Endothelial cell of umbilical vein (primary cell): ENCODE measurements at regions of chr13 and their contacts with region 1.

Region 1: DNA sequence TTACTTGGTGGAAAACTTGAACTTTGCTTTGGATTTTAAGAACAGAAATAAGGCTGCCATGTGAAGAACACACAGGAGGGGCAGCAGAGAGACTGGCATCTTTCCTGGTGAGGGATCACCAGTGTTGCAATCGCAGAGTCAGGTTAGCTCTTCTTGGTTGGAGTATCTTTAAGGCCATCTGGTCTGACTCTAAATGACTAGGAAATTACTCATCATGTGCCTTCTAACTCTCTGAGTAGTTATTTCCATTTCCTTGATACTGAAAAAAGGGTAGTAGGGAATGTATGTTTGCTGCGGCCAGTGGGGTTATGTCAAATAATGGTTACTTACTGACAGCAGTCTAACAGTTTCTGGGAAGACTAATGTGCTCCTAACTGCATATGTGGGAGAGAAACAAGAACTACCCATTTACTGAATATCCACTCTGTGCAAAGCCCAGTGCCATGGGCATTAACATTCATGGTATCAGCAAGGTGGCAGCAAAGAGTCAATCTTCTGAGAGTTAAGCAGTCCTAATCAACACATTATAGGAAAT is 122.1 kb downstream of the COG6 start:
- DNase-seq: peak; percentile 88
- H3K4me3 ChIP-seq: no peak overlapping the region
- H3K27ac ChIP-seq: peak overlapping the region; percentile 99
- H3K4me1 ChIP-seq: peaks cover 59% of the 10 kb centered on the region
- H3K27me3 ChIP-seq: no peaks in the 10 kb centered on the region
- CTCF ChIP-seq: peak; percentile 51 to 52
- POLR2A ChIP-seq: no peak

Region 2: GRCh38 chr13:39876258-39876657 is 98.7 kb after region 1 on chr13:
- CTCF ChIA-PET with region 1: interaction called, 4 read pairs
- POLR2A ChIA-PET with region 1: no interaction called
- dilution Hi-C with region 1: no loop called
- intact Hi-C with region 1: loop called (anchors 2 kb)
- DNase-seq: peak; percentile 90
- H3K4me3 ChIP-seq: no peak overlapping the region
- H3K27ac ChIP-seq: peak overlapping the region; percentile 98
- H3K4me1 ChIP-seq: peaks cover 67% of the 10 kb centered on the region
- H3K27me3 ChIP-seq: no peaks in the 10 kb centered on the region
- CTCF ChIP-seq: no peak
- POLR2A ChIP-seq: peak; percentile 25

Region 3: GRCh38 chr13:40069173-40070044 is 291.8 kb after region 1 on chr13:
- CTCF ChIA-PET with region 1: interaction called, 23 read pairs
- POLR2A ChIA-PET with region 1: no interaction called
- dilution Hi-C with region 1: no loop called
- intact Hi-C with region 1: loop called (anchors 2 kb)
- DNase-seq: peak; percentile 69
- H3K4me3 ChIP-seq: no peak overlapping the region
- H3K27ac ChIP-seq: no peak overlapping the region
- H3K4me1 ChIP-seq: peaks cover 5% of the 10 kb centered on the region
- H3K27me3 ChIP-seq: no peaks in the 10 kb centered on the region
- CTCF ChIP-seq: peak; percentile 69 to 82
- POLR2A ChIP-seq: no peak

Region 4: DNA sequence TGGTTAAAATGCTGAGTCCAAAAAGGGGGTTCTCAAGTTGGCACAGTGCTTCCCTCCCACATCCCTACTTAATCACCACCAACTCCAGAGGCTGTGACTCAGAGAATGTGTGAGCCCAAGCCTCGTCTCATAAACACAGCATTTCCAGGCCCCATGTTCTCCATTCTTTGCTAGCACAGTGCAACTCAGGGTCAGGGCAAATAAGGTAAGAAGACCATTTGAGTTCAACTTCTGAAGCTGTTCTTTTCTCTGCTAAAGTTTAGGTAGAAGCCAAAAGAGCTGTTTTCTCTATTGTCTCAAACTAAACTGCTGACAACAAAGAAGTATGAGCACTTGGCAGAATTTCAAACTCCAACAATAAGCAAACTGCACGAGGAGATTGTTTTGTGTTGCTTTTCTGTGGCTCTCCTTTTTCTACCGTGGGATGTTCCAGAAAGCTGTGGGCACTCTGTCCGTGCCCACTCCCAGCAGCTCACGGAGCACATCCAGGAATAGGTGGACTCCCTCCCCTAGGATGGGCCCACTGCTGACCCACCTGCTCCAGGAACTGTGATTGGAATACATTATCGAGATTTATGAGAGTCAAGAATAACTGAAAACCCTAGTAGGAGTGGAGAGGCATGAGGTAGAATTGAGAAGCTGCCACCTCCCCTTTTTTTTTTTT is 372.1 kb after region 1 on chr13:
- CTCF ChIA-PET with region 1: interaction called, 4 read pairs
- POLR2A ChIA-PET with region 1: no interaction called
- dilution Hi-C with region 1: no loop called
- intact Hi-C with region 1: loop called (anchors 5 kb)
- DNase-seq: peak; percentile 98
- H3K4me3 ChIP-seq: no peak overlapping the region
- H3K27ac ChIP-seq: peak overlapping the region; percentile 80
- H3K4me1 ChIP-seq: peaks cover 25% of the 10 kb centered on the region
- H3K27me3 ChIP-seq: no peaks in the 10 kb centered on the region
- CTCF ChIP-seq: no peak
- POLR2A ChIP-seq: no peak

Region 5: GRCh38 chr13:40558656-40559055 is 781.1 kb after region 1 on chr13:
- CTCF ChIA-PET with region 1: interaction called, 3 read pairs
- POLR2A ChIA-PET with region 1: no interaction called
- dilution Hi-C with region 1: no loop called
- intact Hi-C with region 1: loop called (anchors 5 kb)
- DNase-seq: peak; percentile 95
- H3K4me3 ChIP-seq: peak overlapping the region in 1 of 3 experiments; percentile 1
- H3K27ac ChIP-seq: peak overlapping the region; percentile 61
- H3K4me1 ChIP-seq: peaks cover 56% of the 10 kb centered on the region
- H3K27me3 ChIP-seq: no peaks in the 10 kb centered on the region
- CTCF ChIP-seq: no peak
- POLR2A ChIP-seq: peak; percentile 35